Activated CD4-positive, alpha-beta memory T cell treated with anti-CD3 and anti-CD28 coated beads, Interleukin-2, amount 10 ng/mL, durations not matched to agents 7 days and 5 days (primary cell): ENCODE measurements at regions of chr14 and their contacts with region 1.

Region 1: DNA sequence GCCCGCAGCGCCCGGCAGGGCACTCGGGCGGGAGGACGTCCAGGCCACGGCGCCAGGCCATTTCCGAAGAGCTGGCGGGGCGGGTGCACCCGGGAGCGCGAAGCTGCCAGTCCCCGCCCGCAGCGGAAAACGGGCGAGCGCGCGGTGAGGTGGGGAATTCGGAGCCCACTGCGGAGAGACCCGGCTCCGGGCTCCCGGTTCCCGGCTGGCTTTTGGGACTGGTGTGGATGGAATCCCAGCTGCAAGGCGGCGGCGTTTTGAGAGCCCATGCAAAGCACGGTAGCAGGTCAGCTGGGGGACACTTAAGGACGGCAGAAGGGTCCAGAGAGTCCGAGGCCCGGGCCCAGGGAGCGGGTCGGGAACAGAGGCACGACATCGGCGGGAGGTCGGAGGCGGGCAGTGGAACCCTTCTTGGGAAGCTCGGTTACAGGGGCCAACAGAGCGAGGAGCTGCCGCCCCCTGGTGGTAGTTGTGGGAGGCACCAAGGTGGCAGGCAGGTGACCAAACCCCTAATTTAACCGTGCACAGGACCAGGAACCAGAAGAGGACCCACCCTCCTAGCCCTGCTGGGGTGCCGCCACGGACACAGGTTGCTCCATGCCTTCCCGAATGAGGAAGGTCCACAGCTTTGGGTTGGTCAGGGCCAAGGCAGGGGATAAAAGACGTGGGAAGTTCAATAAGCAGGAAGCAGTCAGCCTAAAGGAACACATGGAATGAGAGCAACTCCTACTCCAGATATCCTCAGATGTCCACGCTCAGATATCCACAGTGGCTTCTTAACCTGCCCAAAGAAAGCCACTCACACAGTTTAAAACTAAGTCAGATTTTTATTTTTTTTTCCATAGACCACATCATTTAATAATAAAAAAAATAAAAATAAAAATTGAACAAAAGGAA is 685 bp upstream of the CDH24 start:
- DNase-seq: peak; percentile 89
- H3K4me3 Mint-ChIP-seq: peak overlapping the region; percentile 77
- H3K27ac Mint-ChIP-seq: peak overlapping the region; percentile 58
- H3K4me1 Mint-ChIP-seq: peaks cover 17% of the 10 kb centered on the region
- H3K27me3 Mint-ChIP-seq: peaks cover 8% of the 10 kb centered on the region

Region 2: DNA sequence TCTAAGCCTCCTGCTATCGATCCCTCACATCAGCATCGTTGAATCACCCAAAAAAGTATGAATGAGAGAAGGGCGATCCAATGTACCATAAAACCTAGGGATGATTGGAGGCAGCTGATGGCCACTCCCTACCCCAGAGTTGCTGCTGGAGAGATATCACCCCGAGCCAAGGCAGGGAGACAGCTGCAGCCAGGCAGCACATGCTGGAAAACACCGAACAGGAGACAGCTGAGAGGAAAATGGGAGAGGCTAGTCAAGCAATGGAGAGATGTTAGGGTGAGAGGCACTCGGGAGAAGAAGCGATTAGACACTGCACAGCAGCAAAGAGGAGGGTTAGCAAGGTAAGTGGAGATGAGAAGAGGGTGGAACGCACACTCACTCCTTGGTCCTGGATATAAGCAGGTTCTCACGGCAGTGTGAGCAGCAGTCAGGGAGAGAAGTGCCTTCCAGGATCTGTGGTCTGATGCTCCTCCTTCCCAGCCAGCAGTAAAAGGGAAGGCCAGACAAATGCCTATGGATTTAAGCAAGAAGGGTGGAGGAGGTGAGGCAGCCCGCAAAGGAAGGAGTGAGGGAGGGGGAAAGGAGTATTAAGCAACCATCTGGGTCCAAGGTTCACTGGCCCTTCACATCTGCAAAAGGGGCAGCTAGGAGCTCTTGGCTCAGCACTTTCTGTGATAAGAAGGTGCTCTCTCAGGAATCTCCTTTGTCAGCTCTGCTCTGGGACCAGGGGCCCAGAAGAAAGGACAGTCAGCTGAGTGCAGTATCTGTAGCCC is 242.9 kb before region 1 on chr14 and contains the start of gene SLC7A7:
- CTCF ChIA-PET with region 1: no interaction called
- POLR2A ChIA-PET with region 1: no interaction called
- DNase-seq: no peak
- H3K4me3 Mint-ChIP-seq: no peak within 1 kb of the TSS
- H3K27ac Mint-ChIP-seq: no peak within 1 kb of the TSS
- H3K4me1 Mint-ChIP-seq: peaks cover 24% of the 10 kb centered on the region
- H3K27me3 Mint-ChIP-seq: peaks cover 6% of the 10 kb centered on the region
- total RNA-seq, gene SLC7A7: 0.38 to 0.60 TPM

Region 3: DNA sequence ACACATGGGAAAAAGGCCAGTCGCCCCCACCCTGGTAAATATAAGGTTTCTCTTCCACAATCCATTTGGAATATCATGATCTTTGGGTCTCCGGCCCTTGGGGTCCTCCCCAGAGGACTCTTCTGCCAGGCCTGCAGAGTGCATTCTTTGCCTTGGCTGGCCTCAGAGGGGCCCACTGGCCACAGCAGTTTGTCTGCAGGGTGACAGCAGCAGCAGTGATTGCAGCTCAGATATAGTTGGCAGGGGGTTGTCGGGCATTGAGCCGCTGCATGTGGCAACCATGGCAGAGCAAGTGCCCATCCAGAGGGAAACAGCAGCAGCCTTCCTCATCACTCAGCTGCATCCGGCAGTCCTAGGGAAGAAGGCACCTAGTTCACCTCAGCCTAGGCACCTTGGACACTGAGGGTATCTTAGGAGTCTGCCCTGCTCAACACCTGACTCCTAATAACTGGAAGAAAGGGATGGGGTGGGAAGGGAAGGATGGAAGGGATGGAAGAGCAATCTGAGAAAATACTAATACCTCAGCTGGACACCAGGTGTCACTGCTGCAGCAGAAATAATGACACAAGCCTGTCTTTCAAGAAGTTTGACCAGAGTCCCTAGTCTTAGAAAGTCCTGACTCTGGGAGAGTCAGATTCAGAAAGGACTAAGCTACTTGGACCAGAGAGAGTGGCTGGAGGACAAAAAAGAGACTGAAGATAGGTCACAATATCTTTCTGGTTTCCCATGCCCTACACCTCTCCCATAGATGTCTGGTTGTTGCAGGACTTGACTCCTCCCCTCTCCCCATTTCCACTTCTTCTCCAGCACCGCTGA is 84.6 kb before region 1 on chr14:
- CTCF ChIA-PET with region 1: interaction called, 33 read pairs
- POLR2A ChIA-PET with region 1: interaction called, 7 read pairs
- DNase-seq: peak; percentile 43
- H3K4me3 Mint-ChIP-seq: no peak overlapping the region
- H3K27ac Mint-ChIP-seq: no peak overlapping the region
- H3K4me1 Mint-ChIP-seq: no peaks in the 10 kb centered on the region
- H3K27me3 Mint-ChIP-seq: peaks cover 13% of the 10 kb centered on the region

Region 4: GRCh38 chr14:23000860-23001259 is 57.1 kb before region 1 on chr14:
- CTCF ChIA-PET with region 1: interaction called, 71 read pairs
- POLR2A ChIA-PET with region 1: no interaction called
- DNase-seq: no peak
- H3K4me3 Mint-ChIP-seq: no peak overlapping the region
- H3K27ac Mint-ChIP-seq: no peak overlapping the region
- H3K4me1 Mint-ChIP-seq: peaks cover 7% of the 10 kb centered on the region
- H3K27me3 Mint-ChIP-seq: no peaks in the 10 kb centered on the region

Region 5: DNA sequence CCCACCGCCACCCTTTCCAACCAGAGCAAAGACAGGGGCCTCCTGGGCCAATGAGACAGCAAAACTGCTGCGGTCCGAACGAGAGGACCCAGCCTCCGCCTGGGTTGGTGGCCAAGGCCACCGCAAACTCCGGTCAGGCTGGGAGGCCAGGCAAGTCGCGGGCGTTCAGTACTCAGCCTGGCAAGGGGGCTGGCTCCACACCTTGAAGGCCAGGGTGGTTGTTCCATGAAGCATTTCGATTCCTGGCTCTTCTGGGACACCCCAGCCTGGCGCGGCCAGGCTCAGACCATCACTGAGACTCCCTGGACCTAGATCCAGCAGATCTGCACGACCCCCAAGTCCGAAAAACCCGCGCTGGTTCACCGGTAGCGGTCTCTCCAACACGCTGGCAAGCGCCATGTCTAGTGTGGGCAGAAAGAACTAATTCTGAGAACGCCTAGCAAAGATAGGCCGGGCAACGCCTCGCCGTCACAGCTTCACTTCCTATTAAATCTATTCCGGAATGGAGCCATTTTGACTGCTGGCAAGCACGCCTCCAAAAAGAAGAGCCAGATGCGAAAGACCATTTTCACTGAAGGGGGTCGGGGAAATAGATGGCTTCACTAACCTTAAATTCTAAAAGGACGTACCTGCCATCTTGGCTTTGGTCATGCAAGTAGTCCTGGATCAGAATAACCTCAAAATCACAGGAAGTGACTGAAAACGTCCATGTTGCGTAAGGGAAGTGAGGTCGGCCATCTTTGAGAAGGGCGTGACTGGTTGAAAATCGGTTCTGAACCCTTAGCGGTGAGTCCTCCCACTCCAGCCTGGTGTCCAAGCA is 23.3 kb before region 1 on chr14 and contains the start of gene PSMB5:
- CTCF ChIA-PET with region 1: interaction called, 13 read pairs
- POLR2A ChIA-PET with region 1: interaction called, 3 read pairs
- DNase-seq: peak; percentile 91
- H3K4me3 Mint-ChIP-seq: peak within 1 kb of the TSS; percentile 72
- H3K27ac Mint-ChIP-seq: peak within 1 kb of the TSS; percentile 86
- H3K4me1 Mint-ChIP-seq: peaks cover 36% of the 10 kb centered on the region
- H3K27me3 Mint-ChIP-seq: no peaks in the 10 kb centered on the region
- total RNA-seq, gene PSMB5: 55.0 to 57.5 TPM

Region 6: DNA sequence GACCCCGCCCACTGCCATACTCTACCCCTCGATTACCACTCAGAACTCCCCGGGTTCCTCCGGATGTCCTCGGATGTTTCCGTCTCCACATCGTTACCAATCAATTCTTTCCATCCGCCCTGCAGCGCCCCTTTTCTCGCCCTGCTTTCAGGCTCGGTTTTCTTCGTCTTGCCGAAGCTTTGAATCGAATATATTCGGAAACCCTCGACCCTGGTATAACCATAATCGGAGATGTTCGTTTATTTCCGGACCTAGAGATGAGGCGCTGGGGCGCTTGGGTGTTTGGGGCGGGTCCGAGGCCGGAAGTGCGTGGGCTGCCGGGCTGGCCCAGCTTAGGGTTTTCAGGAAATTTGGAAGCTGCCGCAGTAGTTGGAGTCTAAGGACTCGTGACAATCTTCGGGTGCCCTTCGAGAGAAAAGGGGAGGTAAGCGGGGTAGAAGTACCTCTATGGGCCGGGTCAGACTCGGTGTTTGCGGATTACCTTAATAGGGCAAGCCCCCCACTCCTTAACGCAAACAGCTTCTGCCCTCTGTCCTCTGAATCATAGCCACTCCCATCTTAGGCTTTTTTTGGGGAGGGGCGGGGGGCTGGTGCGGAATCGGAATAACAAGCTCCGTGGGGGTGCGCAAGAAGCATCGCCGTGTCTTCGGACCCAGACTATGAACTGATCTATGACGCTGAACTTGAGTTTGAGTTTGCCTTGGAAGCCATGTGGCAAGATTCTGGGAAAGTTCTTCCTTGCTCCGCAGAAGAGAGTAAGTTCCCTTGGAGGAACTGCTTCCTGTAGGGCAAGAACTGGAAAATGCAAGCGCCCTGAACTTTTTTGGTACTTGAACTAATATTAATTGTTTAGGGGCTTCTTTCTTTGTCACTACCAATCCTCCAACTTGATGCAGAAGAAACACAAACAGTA is 37.4 kb after region 1 on chr14 and contains the start of gene C14orf119:
- CTCF ChIA-PET with region 1: interaction called, 13 read pairs
- POLR2A ChIA-PET with region 1: interaction called, 10 read pairs
- DNase-seq: peak; percentile 100
- H3K4me3 Mint-ChIP-seq: no peak within 1 kb of the TSS
- H3K27ac Mint-ChIP-seq: no peak within 1 kb of the TSS
- H3K4me1 Mint-ChIP-seq: peaks cover 36% of the 10 kb centered on the region
- H3K27me3 Mint-ChIP-seq: no peaks in the 10 kb centered on the region
- total RNA-seq, gene C14orf119: 49.2 to 55.5 TPM